Right ventricle myocardium superior (tissue), 1 donor: ENCODE measurements at regions of chr11 and their contacts with region 1.

Region 1: GRCh38 chr11:5380740-5381342 is 2.8 kb upstream of the OR51M1 start:
- DNase-seq: no peak
- ATAC-seq: peak; percentile 83

Region 2: DNA sequence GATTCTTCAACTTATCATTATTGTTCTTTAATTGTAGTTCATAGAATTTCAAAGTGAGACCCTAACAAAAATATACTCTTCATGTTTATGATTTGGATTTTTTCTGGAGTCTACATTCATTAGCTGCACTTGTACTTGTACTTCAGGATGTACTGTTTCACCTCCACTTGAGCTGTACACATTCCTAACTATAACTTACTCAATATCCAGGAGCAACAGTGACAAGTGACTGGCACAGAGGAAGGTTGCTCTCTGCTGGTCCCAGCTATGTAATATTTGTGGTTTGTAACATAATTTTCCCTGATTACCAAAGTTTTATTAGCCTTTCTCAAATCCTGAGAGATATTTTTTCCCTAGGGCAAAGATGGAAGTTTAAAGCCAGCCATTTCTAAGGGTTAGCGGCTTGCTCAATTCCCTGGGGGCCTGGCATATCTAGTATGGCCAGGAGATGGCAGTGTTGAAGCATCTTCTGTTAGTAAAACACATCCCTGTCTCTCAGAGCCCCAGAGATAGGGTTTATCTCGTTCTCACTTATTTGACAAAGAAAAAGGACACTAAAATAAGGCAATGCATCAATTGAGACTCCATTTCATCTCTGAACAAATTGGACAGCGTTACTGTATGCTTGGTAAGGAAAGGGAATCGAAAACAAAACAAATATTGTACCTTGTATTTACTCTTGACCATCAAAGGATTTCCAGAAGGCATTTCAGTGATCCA is 256.9 kb before region 1 on chr11:
- intact Hi-C with region 1: loop called (anchors 5 kb)
- DNase-seq: peak; percentile 48
- ATAC-seq: peak; percentile 64

Region 3: DNA sequence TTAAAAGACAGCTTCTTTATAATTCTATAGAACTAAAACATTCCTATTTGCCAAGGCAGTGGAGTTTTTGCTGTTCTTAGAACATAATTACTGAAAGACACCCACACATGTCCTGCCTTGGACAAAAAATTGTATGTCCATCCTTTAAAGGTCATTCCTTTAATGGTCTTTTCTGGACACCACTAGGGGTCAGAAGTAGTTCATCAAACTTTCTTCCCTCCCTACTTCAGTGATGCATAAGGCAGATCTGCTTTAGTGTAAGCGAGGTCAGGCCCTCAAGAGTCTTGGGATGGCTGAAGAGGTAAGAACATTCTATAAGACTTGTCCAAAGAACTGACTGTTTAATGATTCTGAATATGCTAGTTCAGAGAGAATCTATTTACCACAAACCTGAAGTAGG is 176.1 kb before region 1 on chr11:
- intact Hi-C with region 1: loop called (anchors 2 kb)
- DNase-seq: no peak
- ATAC-seq: peak; percentile 61